ENCODE measurements at regions of chr3 and their contacts with region 1.

Region 1: DNA sequence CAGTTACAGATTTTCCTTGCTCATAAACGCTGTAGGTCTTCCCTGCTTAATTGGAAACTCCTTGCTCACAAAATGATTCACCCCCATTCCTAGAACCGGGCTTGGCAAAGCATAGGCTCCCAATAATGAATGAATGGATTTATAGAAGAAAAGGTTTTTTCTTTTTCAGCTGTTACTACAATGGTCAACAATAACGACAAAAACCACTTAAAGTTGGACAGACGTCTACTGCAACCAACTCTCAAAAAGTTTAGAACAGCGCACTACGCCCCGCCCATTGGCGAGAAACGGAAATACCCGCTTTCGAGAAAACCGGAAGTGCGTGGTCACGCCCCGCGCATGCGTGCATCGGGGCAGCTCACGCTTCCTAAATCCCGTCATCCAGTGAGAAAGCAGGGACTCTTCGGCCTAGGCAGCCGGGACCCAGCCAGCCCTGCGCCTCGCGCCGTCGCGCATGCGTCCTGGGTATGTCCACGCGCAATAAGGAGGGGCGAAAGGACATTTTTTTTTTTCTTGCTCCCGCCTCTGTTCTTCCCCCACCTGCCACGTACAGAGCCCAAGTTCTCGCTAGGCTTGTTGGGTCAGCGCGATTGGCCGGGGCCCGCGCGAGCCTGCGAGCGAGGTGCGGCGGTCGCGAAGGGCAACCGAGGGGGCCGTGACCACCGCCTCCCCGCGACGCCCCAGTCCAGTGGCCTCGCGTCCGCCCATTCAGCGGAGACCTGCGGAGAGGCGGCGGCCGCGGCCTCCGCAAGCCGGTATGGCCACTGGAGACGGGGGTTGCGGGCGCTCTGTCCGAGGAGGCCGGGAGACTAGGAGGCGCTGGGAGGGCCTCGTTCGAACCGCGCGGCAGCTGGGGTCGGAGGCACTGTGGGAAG is at the start of gene TFG:
- DNase-seq: peak; percentile 100
- H3K4me3 ChIP-seq: peak within 1 kb of the TSS; percentile 79 to 99 (median 89)
- H3K27ac ChIP-seq: peak within 1 kb of the TSS; percentile 78
- H3K4me1 ChIP-seq: peaks cover 8% of the 10 kb centered on the region
- H3K27me3 ChIP-seq: peaks cover 5 to 7% of the 10 kb centered on the region in 2 experiments
- CTCF ChIP-seq: no peak
- POLR2A ChIP-seq: peak; percentile 61
- total RNA-seq, gene TFG: 106 and 107 TPM in 2 replicates

Region 2: GRCh38 chr3:100492059-100493006 is 216.9 kb before region 1 on chr3 and contains the start of gene TMEM45A:
- CTCF ChIA-PET with region 1: no interaction called
- POLR2A ChIA-PET with region 1: no interaction called
- dilution Hi-C with region 1: no loop called
- intact Hi-C with region 1: loop called (anchors 10 kb)
- DNase-seq: peak; percentile 97
- H3K4me3 ChIP-seq: peak within 1 kb of the TSS; percentile 55 to 88 (median 57)
- H3K27ac ChIP-seq: peak within 1 kb of the TSS; percentile 61
- H3K4me1 ChIP-seq: peaks cover 9% of the 10 kb centered on the region
- H3K27me3 ChIP-seq: peaks cover 0 to 3% of the 10 kb centered on the region in 2 experiments
- CTCF ChIP-seq: no peak
- POLR2A ChIP-seq: peak; percentile 66
- total RNA-seq, gene TMEM45A: 5.4 and 5.6 TPM in 2 replicates

Region 3: DNA sequence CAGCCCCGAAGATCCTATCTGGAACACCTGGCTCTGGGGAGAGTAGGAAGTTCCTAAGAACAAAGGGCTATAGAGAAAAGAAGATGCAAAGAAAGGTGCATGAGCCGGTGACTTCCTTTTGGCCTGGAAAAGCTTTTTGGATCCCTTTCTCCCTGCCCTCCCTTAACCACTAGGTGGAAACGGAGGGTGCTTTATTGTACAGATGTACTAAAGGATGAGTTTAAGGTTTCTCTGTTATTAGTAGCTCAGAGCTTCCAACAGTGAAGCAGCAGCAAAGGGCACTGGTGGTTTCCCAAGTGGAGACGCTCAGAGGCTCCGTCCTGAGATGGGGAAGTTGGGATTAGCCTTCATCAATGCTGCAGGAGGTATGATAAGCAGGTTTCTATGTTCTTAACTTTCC is 105.7 kb before region 1 on chr3:
- CTCF ChIA-PET with region 1: interaction called, 11 read pairs
- POLR2A ChIA-PET with region 1: no interaction called
- dilution Hi-C with region 1: no loop called
- intact Hi-C with region 1: no loop called
- DNase-seq: peak; percentile 13
- H3K4me3 ChIP-seq: no peak overlapping the region
- H3K27ac ChIP-seq: no peak overlapping the region
- H3K4me1 ChIP-seq: no peaks in the 10 kb centered on the region
- H3K27me3 ChIP-seq: peaks cover 2 to 7% of the 10 kb centered on the region in 2 experiments
- CTCF ChIP-seq: peak; percentile 18 to 22
- POLR2A ChIP-seq: no peak

Region 4: GRCh38 chr3:100629421-100630127 is 79.6 kb before region 1 on chr3:
- CTCF ChIA-PET with region 1: no interaction called
- POLR2A ChIA-PET with region 1: no interaction called
- dilution Hi-C with region 1: no loop called
- intact Hi-C with region 1: loop called (anchors 5 kb)
- DNase-seq: peak; percentile 88
- H3K4me3 ChIP-seq: peak overlapping the region in 1 of 3 experiments; percentile 12
- H3K27ac ChIP-seq: peak overlapping the region; percentile 84
- H3K4me1 ChIP-seq: peaks cover 16% of the 10 kb centered on the region
- H3K27me3 ChIP-seq: no peaks in the 10 kb centered on the region
- CTCF ChIP-seq: no peak
- POLR2A ChIP-seq: peak; percentile 55